ENCODE measurements at regions of chr20 and their contacts with region 1.

Region 1: DNA sequence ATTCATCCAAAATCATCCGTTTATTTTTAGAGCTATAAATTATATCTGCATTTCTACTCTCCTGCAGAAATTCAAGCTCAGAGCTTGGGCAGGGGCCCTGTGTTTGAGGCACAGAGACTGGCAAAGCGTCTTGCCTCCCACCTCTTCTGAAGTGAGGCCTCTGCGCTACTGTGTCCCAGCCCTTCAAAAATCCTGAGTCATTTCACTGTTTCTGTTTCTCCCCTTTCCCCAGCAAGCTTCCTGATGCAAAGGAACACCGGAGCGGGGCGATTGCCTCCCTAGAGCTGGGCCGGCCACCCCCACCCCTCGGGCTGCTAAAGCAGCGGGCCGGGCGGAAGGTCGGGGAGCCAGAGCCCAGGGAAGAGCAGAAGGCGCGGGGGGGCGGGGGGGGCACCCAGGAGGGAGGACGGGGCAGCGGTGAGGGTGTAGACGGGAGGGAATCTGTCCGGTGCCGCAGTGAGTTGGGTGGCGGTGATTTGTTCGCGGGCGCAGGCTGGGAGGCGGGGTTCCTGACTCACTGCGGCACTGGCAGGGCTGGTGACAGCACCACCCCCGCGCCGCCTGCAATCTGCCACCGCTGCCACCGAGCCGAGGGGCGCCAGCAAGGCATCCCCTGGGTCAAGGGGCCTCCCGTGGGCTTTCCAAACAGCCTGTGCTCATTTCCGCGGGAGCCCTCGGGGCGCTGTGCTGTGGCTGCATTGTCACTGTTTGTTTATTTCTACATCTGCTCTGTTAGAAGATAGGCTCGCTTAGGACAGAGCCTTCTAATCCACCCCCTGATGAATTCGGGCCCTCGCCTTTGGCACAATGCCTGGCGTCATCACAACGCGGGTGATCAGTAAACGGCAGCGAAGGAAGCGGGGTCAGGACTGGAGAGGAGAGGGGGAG is 46.5 kb upstream of the SNAP25 start:
- DNase-seq: no peak
- H3K4me3 ChIP-seq: peak overlapping the region; percentile 38
- CTCF ChIP-seq: no peak

Region 2: DNA sequence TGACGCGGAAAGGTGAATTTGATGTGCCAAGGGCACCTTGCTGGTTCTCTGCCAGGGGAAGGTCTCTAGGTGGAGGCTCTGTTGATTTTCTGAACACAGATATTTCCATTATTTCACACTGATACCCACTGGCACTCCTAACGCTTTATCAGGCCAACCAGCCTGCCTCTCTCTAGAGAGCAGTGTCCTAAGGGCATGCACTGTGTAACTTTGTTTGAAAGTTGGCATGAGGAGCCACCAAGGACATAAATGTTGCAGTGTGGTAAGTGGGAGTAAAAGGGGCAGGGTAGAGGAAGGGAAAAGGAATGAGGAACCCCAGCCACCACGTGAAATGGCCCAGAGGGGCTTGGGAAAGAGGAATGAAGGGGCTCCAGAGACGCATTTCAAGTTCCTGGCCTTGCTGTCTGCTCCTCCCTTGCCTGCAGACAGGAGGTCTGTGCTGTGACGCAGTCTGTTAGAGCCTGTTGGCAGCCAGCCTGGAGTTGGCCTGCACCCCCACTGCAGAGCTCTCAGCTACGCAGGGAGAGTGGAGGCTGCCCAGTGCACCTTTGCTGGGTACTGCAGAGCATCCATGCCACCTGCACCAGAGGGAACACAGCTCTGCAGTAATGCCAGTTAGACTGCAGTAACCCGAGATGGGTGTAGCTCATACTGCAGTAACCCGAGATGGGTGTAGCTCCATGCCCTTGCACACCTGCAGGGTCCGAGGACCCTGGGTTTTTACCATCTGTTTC is 40.3 kb before region 1 on chr20:
- in situ Hi-C with region 1: no loop called
- DNase-seq: peak; percentile 72
- H3K4me3 ChIP-seq: no peak overlapping the region
- CTCF ChIP-seq: peak; percentile 6

Region 3: DNA sequence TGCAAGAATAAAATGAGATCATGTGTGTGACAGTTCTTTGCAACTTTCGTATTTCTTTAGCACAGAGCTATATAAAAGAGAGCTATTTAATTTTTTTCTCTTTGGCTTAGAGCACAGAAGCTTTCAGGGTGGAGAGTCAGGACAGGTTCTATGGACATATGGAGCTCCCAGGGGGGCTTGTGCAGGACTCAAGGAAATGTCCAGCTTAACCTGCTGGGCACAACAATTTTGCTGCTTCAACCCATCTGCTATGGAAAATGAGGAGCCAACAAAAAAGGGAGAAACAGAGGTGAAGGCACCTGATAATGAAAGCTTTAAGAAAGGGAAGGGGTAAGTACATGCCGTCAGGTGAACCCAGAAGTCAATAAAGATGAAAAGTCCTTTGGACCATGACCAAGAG is 41.4 kb after region 1 on chr20:
- in situ Hi-C with region 1: loop called (anchors 5 kb)
- DNase-seq: no peak
- H3K4me3 ChIP-seq: no peak overlapping the region
- CTCF ChIP-seq: no peak

Region 4: GRCh38 chr20:10385850-10386544 is 213.9 kb after region 1 on chr20:
- in situ Hi-C with region 1: no loop called
- DNase-seq: no peak
- H3K4me3 ChIP-seq: no peak overlapping the region
- CTCF ChIP-seq: no peak

Measured in astrocyte of the cerebellum (primary cell).